Activated B cell treated with CpG ODN at 0.5 μM for 24 hours (primary cell): ENCODE measurements at regions of chr7 and their contacts with region 1.

Region 1: GRCh38 chr7:56074371-56074791 is 10.3 kb downstream of the SUMF2 start:
- DNase-seq: peak; percentile 64
- ATAC-seq: peak; percentile 94
- H3K4me3 Mint-ChIP-seq: no peak overlapping the region
- H3K27ac Mint-ChIP-seq: no peak overlapping the region
- H3K4me1 Mint-ChIP-seq: peaks cover 4% of the 10 kb centered on the region
- H3K27me3 Mint-ChIP-seq: no peaks in the 10 kb centered on the region
- CTCF ChIP-seq: no peak

Region 2: DNA sequence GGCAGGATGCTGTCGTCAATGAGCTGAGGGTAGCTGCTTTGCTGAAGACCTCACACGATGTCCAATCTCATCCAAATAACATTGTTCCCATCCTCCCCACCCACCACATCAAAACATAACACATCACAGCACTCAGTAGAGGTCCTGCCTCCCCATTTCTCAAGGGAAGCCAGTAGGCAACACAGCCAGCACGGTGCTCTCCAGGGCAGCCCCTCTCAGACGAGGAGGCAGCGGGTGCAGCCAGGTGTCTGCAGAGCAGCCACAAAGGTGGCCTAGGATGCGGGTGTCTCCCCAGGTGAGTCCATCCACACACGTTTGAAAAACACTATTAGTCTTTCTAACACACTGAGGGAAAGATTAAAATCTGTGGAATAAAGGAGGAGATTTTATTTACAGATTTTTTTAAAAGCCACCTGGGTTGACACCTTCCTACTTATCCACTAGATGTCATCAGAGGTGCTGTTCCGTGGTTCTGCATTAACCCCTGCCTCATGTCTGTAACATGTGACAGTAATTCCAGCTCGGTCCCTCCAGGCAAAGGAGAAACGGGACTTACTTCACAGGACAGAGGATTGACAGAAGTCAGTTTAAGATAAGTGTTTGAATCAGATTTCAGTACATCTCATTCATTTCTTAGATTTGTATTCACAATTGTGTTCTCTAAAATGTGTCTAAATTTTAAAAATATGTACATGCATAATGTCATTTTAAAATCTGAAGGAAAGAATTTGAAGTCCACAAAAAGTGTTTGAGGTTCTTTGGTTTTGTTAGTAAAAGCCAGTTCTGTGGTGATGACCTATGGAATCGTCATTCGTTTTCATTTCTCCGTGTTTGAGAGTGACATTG is 641.2 kb before region 1 on chr7:
- CTCF ChIA-PET with region 1: no interaction called
- POLR2A ChIA-PET with region 1: no interaction called
- intact Hi-C with region 1: loop called (anchors 10 kb)
- DNase-seq: no peak
- ATAC-seq: peak; percentile 70
- H3K4me3 Mint-ChIP-seq: no peak overlapping the region
- H3K27ac Mint-ChIP-seq: no peak overlapping the region
- H3K4me1 Mint-ChIP-seq: no peaks in the 10 kb centered on the region
- H3K27me3 Mint-ChIP-seq: no peaks in the 10 kb centered on the region
- CTCF ChIP-seq: no peak

Region 3: DNA sequence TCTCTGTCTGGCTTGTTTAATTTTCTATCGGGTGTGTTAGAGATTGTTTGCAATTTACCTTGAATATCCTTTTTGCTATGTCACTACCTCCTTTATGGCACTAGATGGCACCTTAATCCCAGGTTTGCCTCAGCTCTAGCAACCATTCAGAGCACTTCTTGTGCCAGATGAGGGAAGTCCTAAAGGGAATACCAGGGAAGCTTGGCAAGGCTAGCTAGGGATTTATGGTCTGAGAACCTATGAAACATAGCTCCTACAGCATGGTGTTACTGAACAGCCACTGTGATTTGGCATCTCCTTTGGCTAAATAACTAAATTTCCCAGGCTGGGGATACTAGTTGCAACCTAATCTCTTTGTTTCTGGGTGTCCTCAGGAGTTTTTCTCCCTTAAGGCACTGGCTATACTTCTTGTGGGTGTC is 433.1 kb before region 1 on chr7:
- CTCF ChIA-PET with region 1: interaction called, 53 read pairs
- POLR2A ChIA-PET with region 1: interaction called, 5 read pairs
- intact Hi-C with region 1: loop called (anchors 1 kb)
- DNase-seq: no peak
- ATAC-seq: peak; percentile 82
- H3K4me3 Mint-ChIP-seq: no peak overlapping the region
- H3K27ac Mint-ChIP-seq: no peak overlapping the region
- H3K4me1 Mint-ChIP-seq: peaks cover 8% of the 10 kb centered on the region
- H3K27me3 Mint-ChIP-seq: peaks cover 2% of the 10 kb centered on the region
- CTCF ChIP-seq: no peak

Region 4: DNA sequence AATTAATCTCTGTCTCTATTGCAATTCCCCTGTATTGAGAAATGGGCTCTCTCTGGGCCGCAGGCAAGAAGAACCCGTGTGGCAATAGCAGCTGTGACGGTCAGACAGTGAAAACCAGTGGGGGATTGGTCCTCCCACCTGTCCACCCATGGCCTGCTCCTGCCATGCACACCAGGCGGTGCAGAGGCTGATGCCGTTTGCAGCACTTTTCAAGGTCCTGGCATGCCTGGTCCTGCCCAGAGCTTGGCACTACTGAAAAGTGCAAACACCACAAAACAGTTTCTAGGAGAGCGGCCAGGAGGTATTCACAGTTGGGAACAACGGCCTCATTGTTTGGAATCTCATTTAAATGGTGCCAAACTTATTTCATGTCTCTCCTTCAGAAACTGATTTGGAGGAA is 64.7 kb before region 1 on chr7:
- CTCF ChIA-PET with region 1: interaction called, 48 read pairs
- POLR2A ChIA-PET with region 1: interaction called, 5 read pairs
- intact Hi-C with region 1: loop called (anchors 1 kb)
- DNase-seq: no peak
- ATAC-seq: no peak
- H3K4me3 Mint-ChIP-seq: no peak overlapping the region
- H3K27ac Mint-ChIP-seq: no peak overlapping the region
- H3K4me1 Mint-ChIP-seq: no peaks in the 10 kb centered on the region
- H3K27me3 Mint-ChIP-seq: no peaks in the 10 kb centered on the region
- CTCF ChIP-seq: no peak

Region 5: DNA sequence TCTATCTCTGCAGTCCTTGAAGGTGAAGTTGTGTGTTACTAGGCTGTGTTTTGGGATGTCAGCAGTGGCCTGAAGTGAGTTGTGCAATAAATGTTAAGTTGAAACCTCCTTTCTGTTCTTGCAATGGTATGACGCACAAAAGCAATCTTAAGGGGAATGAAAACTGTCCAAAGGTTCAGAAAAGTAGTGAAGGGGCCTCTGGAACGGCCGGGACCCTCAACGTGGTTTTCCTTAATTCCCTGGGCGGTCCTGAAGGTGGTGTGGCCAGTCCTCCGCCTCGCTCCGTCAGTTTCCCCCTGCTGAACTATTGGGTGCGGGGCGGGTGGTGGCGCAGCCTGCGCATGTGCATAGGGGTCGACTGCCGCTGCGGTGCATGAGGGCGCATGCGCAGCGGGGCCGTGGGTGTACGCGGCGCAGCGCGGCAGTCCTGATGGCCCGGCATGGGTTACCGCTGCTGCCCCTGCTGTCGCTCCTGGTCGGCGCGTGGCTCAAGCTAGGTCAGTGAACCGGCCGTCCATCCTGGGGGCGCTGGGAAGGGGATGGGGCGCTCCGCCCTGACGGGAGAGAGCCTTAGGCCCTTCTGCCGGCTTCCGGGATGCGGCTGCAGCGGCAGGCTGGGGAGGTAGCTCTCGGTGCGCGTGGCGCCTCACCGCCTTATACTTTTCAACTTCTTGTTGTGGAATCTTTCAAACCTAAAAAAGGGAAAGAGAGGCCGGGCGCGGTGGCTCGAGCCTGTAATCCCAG is 10.3 kb before region 1 on chr7 and contains the start of gene SUMF2:
- CTCF ChIA-PET with region 1: interaction called, 25 read pairs
- POLR2A ChIA-PET with region 1: interaction called, 3 read pairs
- intact Hi-C with region 1: loop called (anchors 1 kb)
- DNase-seq: peak; percentile 91
- ATAC-seq: peak; percentile 92
- H3K4me3 Mint-ChIP-seq: peak within 1 kb of the TSS; percentile 92
- H3K27ac Mint-ChIP-seq: peak within 1 kb of the TSS; percentile 85
- H3K4me1 Mint-ChIP-seq: peaks cover 32% of the 10 kb centered on the region
- H3K27me3 Mint-ChIP-seq: no peaks in the 10 kb centered on the region
- CTCF ChIP-seq: no peak
- total RNA-seq, gene SUMF2: 91.1 and 103 TPM in 2 replicates

Region 6: GRCh38 chr7:56287421-56288138 is 213.2 kb after region 1 on chr7:
- CTCF ChIA-PET with region 1: no interaction called
- POLR2A ChIA-PET with region 1: no interaction called
- intact Hi-C with region 1: no loop called
- DNase-seq: no peak
- ATAC-seq: no peak
- H3K4me3 Mint-ChIP-seq: no peak overlapping the region
- H3K27ac Mint-ChIP-seq: no peak overlapping the region
- H3K4me1 Mint-ChIP-seq: no peaks in the 10 kb centered on the region
- H3K27me3 Mint-ChIP-seq: no peaks in the 10 kb centered on the region
- CTCF ChIP-seq: no peak